Heart right ventricle (tissue), 16 donors: ENCODE measurements at regions of chr9 and their contacts with region 1.

Region 1: DNA sequence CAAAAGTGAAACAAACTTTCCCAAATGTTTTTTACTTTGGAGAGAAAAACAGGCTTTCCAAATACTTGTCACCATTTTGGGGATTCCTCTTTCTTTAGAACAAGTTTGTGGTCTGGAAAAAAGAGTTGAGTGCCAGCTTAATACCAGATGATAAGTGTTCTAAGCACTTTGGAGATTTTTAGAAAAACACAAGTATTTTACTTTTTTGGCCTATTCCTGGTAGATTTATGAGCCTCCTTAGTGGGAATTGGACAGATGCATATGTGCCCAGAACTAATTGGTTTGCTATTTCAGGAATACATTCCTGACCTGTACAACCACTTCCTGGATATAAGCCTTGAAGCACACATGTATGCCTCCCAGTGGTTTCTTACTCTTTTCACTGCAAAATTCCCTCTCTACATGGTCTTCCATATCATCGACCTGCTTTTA is 40.5 kb downstream of the GPR21 start:
- DNase-seq: no peak
- ATAC-seq: peak in 3 of 8 donors; percentile 24 to 41 (median 27)
- H3K4me3 ChIP-seq: peak overlapping the region in 2 of 10 donors; percentile 4 to 11
- H3K27ac ChIP-seq: peak overlapping the region in 7 of 10 donors; percentile 5 to 65 (median 35)
- H3K4me1 ChIP-seq: peaks cover 0 to 39% (median 20%) of the 10 kb centered on the region in 9 donors
- H3K27me3 ChIP-seq: no peaks in the 10 kb centered on the region
- CTCF ChIP-seq: no peak

Region 2: DNA sequence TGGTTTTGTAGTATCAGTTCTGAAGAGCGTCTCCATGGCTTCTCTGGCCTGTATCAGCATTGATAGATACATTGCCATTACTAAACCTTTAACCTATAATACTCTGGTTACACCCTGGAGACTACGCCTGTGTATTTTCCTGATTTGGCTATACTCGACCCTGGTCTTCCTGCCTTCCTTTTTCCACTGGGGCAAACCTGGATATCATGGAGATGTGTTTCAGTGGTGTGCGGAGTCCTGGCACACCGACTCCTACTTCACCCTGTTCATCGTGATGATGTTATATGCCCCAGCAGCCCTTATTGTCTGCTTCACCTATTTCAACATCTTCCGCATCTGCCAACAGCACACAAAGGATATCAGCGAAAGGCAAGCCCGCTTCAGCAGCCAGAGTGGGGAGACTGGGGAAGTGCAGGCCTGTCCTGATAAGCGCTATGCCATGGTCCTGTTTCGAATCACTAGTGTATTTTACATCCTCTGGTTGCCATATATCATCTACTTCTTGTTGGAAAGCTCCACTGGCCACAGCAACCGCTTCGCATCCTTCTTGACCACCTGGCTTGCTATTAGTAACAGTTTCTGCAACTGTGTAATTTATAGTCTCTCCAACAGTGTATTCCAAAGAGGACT is 39.0 kb before region 1 on chr9:
- intact Hi-C with region 1: loop called in 1 of 10 experiments (anchors 5 kb)
- DNase-seq: no peak
- ATAC-seq: peak in 4 of 8 donors; percentile 27 to 55 (median 48)
- H3K4me3 ChIP-seq: peak overlapping the region in 7 of 10 donors; percentile 14 to 46 (median 43)
- H3K27ac ChIP-seq: peak overlapping the region in 5 of 10 donors; percentile 21 to 41 (median 34)
- H3K4me1 ChIP-seq: peaks cover 0 to 56% (median 26%) of the 10 kb centered on the region in 9 donors
- H3K27me3 ChIP-seq: no peaks in the 10 kb centered on the region
- CTCF ChIP-seq: no peak